Activated B cell treated with CpG ODN at 0.5 μM for 24 hours (primary cell): ENCODE measurements at regions of chr14 and their contacts with region 1.

Region 1: DNA sequence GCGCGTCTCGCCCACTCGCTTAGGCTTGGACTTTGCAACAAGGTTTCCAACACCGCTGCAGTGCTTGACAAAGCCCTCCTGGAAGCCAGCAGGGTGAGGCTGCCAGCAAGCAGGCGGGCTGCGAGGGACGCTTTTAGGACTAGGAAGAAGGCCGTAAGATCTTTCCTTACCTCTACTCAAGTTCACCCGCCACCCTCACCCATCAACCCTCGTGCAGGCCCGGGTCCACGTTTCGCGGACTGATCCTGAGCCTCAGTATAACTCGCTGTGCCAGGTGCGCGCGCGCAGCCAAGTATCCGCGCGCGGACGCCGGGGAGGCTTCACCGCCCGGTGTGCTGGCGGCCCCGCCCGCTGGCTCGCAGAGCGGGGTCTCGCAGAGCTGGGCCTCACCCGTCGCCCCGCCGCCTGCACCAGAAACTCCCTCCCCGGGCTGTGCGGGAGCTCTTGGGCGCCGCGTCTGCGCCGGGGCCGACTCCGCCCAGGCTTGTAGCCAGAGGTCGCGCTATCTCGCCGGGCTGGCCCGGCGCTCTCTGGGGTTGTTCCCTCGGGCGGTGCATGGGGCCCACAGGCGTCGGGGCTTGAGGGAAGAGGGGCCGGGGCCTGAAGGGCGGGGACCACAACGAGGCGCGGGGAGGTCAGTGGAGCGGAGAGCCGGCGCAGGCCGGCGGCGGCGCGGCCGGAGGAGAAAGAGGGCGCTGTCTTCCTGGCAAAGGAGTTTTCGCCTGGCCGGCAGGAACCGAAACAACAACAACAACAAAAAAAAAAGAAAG is 7.6 kb upstream of the SIX1 start:
- DNase-seq: peak; percentile 58
- ATAC-seq: peak; percentile 88
- H3K4me3 Mint-ChIP-seq: peak overlapping the region; percentile 90
- H3K27ac Mint-ChIP-seq: no peak overlapping the region
- H3K4me1 Mint-ChIP-seq: peaks cover 39% of the 10 kb centered on the region
- H3K27me3 Mint-ChIP-seq: peaks cover 68% of the 10 kb centered on the region
- CTCF ChIP-seq: no peak

Region 2: DNA sequence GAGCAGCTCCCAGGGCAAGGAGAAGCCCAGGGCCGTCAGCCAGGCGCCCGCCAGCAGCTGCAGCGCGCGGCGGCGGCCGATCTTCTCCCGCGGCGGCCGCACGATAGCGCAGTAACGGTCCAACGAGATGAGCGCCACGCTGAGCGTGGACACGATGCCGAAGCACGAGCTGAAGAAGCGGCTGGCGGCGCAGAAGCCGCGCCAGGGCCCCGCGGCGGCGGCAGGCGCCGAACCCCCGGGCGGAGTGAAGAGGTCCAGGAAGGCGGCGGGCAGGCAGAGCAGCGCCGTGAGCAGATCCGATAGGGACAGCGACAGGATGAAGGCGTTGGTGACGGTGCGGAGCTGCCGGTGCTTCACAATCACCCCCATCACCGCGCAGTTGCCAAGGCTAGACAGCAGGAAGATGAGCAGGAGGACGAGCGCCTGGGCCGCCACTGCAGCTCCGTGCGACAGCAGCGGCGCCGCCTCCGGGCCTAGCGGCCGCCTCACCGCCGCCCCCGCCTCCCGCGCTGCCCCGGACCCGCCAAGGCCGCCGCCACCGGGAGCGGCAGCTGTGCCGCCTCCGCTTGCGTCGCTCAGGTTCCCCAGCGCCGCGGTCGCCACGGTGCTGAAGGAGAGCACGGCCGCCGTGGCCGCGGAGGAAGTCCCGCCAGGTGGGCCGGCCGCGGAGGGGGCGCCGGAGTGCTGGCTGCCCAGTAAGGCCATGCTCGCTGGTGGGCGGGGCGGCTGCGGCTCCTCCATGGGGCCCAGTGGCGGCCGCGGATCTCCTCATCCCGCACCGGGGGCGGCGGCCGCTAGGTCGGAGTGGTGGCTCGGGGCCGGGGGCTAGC is 1192.2 kb before region 1 on chr14:
- CTCF ChIA-PET with region 1: no interaction called
- POLR2A ChIA-PET with region 1: no interaction called
- intact Hi-C with region 1: loop called (anchors 10 kb)
- DNase-seq: peak; percentile 64
- ATAC-seq: peak; percentile 68
- H3K4me3 Mint-ChIP-seq: peak overlapping the region; percentile 86
- H3K27ac Mint-ChIP-seq: peak overlapping the region; percentile 48
- H3K4me1 Mint-ChIP-seq: peaks cover 14% of the 10 kb centered on the region
- H3K27me3 Mint-ChIP-seq: no peaks in the 10 kb centered on the region
- CTCF ChIP-seq: no peak

Region 3: GRCh38 chr14:60640859-60641741 is 15.8 kb before region 1 on chr14:
- CTCF ChIA-PET with region 1: no interaction called
- POLR2A ChIA-PET with region 1: interaction called, 5 read pairs
- intact Hi-C with region 1: loop called (anchors 2 kb)
- DNase-seq: no peak
- ATAC-seq: no peak
- H3K4me3 Mint-ChIP-seq: no peak overlapping the region
- H3K27ac Mint-ChIP-seq: no peak overlapping the region
- H3K4me1 Mint-ChIP-seq: peaks cover 9% of the 10 kb centered on the region
- H3K27me3 Mint-ChIP-seq: peaks cover 71% of the 10 kb centered on the region
- CTCF ChIP-seq: no peak

Region 4: DNA sequence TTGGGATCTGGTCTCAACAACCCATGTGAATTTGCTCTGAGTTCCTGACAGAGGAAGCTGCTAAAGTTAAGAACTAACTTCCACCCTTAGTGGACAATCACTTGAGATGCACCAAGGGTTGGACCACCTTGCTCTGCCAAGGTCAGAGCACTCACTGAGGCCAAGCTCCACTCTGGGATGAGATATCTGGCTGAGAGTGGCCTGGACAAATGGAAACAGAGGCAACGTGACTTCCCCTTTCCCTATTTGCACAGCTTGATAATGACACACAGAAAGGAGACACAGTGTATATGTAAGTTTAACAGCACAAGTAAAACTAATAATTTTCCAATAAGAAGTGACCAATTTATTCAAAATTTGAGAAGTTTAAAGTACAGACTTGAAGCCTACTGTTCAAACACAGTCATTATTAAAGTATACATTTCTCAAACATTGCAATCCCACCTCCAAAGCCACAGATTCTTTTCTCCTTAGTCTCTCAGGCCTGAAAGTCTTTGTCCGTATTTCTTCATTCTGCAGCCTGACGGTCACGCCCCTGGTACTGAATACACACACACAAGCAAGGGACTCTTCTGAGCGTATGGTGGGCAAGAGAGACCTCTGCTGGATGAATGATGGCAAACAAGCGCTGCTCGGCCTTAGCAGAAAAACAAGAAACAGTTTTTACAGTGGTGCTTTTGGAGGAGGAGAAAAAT is 595.6 kb after region 1 on chr14:
- CTCF ChIA-PET with region 1: interaction called, 3 read pairs
- POLR2A ChIA-PET with region 1: no interaction called
- intact Hi-C with region 1: loop called (anchors 10 kb)
- DNase-seq: no peak
- ATAC-seq: peak; percentile 85
- H3K4me3 Mint-ChIP-seq: no peak overlapping the region
- H3K27ac Mint-ChIP-seq: no peak overlapping the region
- H3K4me1 Mint-ChIP-seq: peaks cover 9% of the 10 kb centered on the region
- H3K27me3 Mint-ChIP-seq: peaks cover 5% of the 10 kb centered on the region
- CTCF ChIP-seq: peak; percentile 43